ENCODE measurements at regions of chr5 and their contacts with region 1.

Region 1: GRCh38 chr5:82165740-82166530 is 112.2 kb downstream of the RPS23 start:
- DNase-seq: peak; percentile 94
- H3K4me3 Mint-ChIP-seq: no peak overlapping the region
- H3K27ac Mint-ChIP-seq: peak overlapping the region; percentile 88
- H3K4me1 Mint-ChIP-seq: peaks cover 41% of the 10 kb centered on the region
- H3K27me3 Mint-ChIP-seq: no peaks in the 10 kb centered on the region
- CTCF ChIP-seq: peak; percentile 89

Region 2: GRCh38 chr5:81425569-81425968 is 740.4 kb before region 1 on chr5:
- CTCF ChIA-PET with region 1: interaction called, 19 read pairs
- POLR2A ChIA-PET with region 1: interaction called, 3 read pairs
- intact Hi-C with region 1: loop called (anchors 1 kb)
- DNase-seq: peak; percentile 49
- H3K4me3 Mint-ChIP-seq: no peak overlapping the region
- H3K27ac Mint-ChIP-seq: peak overlapping the region; percentile 16
- H3K4me1 Mint-ChIP-seq: peaks cover 16% of the 10 kb centered on the region
- H3K27me3 Mint-ChIP-seq: no peaks in the 10 kb centered on the region
- CTCF ChIP-seq: peak; percentile 51

Region 3: DNA sequence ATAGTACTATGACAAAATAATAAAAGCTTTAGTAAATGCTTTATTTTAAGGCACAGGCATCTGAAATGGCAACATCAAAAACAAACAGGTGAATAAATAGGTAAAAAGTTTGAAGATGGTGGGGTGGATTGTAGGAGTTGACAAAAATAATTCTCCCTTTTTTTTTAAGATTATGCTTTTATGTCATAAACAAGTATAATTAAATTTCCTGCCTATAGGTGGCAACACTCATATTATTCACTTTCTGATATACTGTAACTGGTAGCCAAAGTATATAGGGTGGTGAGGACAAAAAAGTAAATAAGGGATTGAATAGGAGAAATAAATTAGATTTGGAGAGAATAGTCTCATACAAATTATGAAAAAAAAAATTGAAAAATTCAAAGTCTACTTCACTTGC is 652.0 kb before region 1 on chr5:
- CTCF ChIA-PET with region 1: interaction called, 3 read pairs
- POLR2A ChIA-PET with region 1: interaction called, 4 read pairs
- intact Hi-C with region 1: loop called (anchors 1 kb)
- DNase-seq: peak; percentile 20
- H3K4me3 Mint-ChIP-seq: no peak overlapping the region
- H3K27ac Mint-ChIP-seq: no peak overlapping the region
- H3K4me1 Mint-ChIP-seq: no peaks in the 10 kb centered on the region
- H3K27me3 Mint-ChIP-seq: no peaks in the 10 kb centered on the region
- CTCF ChIP-seq: peak; percentile 35

Region 4: GRCh38 chr5:81851481-81852178 is 314.3 kb before region 1 on chr5:
- CTCF ChIA-PET with region 1: interaction called, 25 read pairs
- POLR2A ChIA-PET with region 1: interaction called, 53 read pairs
- intact Hi-C with region 1: loop called (anchors 1 kb)
- DNase-seq: peak; percentile 91
- H3K4me3 Mint-ChIP-seq: peak overlapping the region; percentile 83
- H3K27ac Mint-ChIP-seq: peak overlapping the region; percentile 84
- H3K4me1 Mint-ChIP-seq: peaks cover 33% of the 10 kb centered on the region
- H3K27me3 Mint-ChIP-seq: no peaks in the 10 kb centered on the region
- CTCF ChIP-seq: no peak

Region 5: GRCh38 chr5:81971712-81972495 is 194.0 kb before region 1 on chr5 and contains the start of gene ATG10:
- CTCF ChIA-PET with region 1: no interaction called
- POLR2A ChIA-PET with region 1: interaction called, 24 read pairs
- intact Hi-C with region 1: loop called (anchors 2 kb)
- DNase-seq: peak; percentile 86
- H3K4me3 Mint-ChIP-seq: peak within 1 kb of the TSS; percentile 95
- H3K27ac Mint-ChIP-seq: peak within 1 kb of the TSS; percentile 96
- H3K4me1 Mint-ChIP-seq: peaks cover 19% of the 10 kb centered on the region
- H3K27me3 Mint-ChIP-seq: no peaks in the 10 kb centered on the region
- CTCF ChIP-seq: no peak
- total RNA-seq, gene ATG10: 9.9 and 11.1 TPM in 2 replicates

Region 6: DNA sequence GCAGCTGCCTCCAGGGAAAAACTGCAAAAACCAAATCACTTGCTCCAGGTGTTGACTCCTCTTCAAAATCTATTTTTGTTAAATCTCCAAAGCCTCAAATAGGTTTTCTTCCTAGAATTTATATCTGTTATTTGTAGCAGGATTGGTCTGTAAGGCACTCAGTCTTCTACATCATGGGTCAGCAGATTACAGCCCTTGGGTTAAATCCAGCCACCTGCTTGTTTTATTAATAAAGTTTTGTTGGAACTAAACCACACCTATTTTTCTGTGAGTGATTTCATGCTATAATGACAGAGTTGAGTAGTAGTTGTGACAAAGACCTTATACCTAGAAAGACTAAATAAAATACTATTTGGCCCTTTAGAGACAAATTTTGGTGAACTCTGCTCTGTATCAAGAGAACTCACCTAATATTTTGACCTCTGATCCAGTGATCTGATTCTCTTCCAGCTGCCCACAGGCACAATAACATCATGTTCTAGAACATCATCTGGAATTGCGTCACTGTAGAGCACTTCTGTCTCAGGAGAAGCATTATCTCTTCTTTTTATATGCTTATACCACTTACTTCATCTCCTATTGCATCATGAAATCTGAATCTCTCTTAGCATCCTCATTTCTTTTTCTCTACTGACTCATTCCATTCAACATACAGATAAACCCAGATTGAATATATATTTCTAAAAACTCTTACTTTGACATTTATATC is 17.9 kb before region 1 on chr5:
- CTCF ChIA-PET with region 1: interaction called, 10 read pairs
- POLR2A ChIA-PET with region 1: interaction called, 60 read pairs
- intact Hi-C with region 1: no loop called
- DNase-seq: peak; percentile 84
- H3K4me3 Mint-ChIP-seq: peak overlapping the region; percentile 4
- H3K27ac Mint-ChIP-seq: peak overlapping the region; percentile 93
- H3K4me1 Mint-ChIP-seq: peaks cover 47% of the 10 kb centered on the region
- H3K27me3 Mint-ChIP-seq: no peaks in the 10 kb centered on the region
- CTCF ChIP-seq: no peak

Region 7: DNA sequence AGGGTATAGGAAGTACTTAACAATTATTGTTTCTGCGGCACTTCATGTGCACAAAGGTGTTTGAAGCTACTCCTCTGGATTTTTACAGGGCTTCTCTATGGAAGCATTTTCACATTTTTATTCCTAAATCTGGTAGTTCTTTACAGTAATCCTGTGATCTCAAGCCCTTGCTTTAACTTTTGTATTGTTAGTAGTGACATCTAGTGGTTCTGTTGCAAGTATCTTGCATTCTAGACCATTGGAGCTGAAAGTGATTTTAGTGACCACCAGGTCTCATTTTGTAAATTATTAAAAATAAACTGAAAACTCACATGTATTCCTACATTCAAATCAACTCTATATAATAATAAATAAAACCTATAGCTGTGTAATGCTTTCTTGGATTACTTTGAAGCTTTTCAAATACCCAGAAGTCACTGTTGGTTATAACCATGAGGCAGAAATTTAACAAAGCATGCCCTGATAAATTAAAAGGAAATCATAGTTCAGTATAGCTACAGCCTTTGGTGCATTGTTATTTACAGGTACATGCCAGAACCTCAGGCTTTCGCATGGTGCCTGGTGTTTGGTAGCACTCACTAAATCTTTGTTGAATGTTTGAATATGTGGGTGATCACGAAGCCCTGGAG is 93.4 kb after region 1 on chr5:
- CTCF ChIA-PET with region 1: interaction called, 14 read pairs
- POLR2A ChIA-PET with region 1: interaction called, 5 read pairs
- intact Hi-C with region 1: no loop called
- DNase-seq: peak; percentile 25
- H3K4me3 Mint-ChIP-seq: no peak overlapping the region
- H3K27ac Mint-ChIP-seq: no peak overlapping the region
- H3K4me1 Mint-ChIP-seq: no peaks in the 10 kb centered on the region
- H3K27me3 Mint-ChIP-seq: no peaks in the 10 kb centered on the region
- CTCF ChIP-seq: peak; percentile 24

Measured in MCF 10A (cell line).